Activated B cell treated with CpG ODN at 0.5 μM for 24 hours (primary cell): ENCODE measurements at regions of chr17 and their contacts with region 1.

Region 1: DNA sequence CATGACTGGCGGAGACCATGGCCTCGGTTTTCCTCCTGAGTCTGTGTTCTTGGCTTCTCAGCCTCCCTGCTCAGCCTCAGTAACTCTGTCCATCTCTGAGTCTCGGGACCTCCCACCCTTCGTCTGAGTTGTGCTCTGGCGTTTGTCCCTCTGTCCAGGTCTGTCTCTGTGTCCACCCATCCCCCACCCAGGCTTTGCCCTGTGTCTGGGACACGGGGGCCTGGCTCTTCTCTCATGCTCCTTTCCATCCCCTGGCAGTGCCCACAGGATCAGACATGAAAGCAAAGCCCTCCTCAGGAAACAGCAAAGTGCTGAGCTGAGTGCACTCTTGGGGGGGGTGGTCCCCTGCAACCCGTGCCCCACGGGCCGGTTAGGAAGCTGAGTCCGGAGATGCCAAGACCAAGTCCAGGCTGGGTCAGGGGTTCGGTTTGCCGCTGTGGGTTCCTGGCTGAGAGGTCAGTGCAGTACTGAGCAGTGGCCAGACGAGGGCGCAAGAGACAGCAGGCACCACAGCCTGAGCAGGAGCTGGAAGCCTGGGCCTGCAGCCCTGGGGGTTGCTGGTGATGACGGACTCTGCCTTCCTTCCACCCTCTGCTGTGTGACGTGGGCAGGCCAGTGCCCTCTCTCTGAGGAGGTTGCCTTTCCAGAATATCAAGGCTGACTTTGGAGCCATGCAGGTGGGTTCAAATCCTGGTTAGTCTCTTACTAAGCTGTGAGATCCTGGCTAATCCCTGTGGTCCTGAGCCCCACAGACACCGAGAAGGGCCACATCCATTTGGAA is 2.5 kb downstream of the P2RX1 start:
- DNase-seq: peak; percentile 87
- ATAC-seq: peak; percentile 64
- H3K4me3 Mint-ChIP-seq: peak overlapping the region; percentile 82
- H3K27ac Mint-ChIP-seq: peak overlapping the region; percentile 96
- H3K4me1 Mint-ChIP-seq: peaks cover 90% of the 10 kb centered on the region
- H3K27me3 Mint-ChIP-seq: no peaks in the 10 kb centered on the region
- CTCF ChIP-seq: peak; percentile 55

Region 2: GRCh38 chr17:3738562-3739295 is 175.0 kb before region 1 on chr17:
- CTCF ChIA-PET with region 1: interaction called, 4 read pairs
- POLR2A ChIA-PET with region 1: interaction called, 6 read pairs
- intact Hi-C with region 1: loop called (anchors 10 kb)
- DNase-seq: no peak
- ATAC-seq: peak; percentile 43
- H3K4me3 Mint-ChIP-seq: no peak overlapping the region
- H3K27ac Mint-ChIP-seq: peak overlapping the region; percentile 70
- H3K4me1 Mint-ChIP-seq: peaks cover 34% of the 10 kb centered on the region
- H3K27me3 Mint-ChIP-seq: no peaks in the 10 kb centered on the region
- CTCF ChIP-seq: no peak

Region 3: DNA sequence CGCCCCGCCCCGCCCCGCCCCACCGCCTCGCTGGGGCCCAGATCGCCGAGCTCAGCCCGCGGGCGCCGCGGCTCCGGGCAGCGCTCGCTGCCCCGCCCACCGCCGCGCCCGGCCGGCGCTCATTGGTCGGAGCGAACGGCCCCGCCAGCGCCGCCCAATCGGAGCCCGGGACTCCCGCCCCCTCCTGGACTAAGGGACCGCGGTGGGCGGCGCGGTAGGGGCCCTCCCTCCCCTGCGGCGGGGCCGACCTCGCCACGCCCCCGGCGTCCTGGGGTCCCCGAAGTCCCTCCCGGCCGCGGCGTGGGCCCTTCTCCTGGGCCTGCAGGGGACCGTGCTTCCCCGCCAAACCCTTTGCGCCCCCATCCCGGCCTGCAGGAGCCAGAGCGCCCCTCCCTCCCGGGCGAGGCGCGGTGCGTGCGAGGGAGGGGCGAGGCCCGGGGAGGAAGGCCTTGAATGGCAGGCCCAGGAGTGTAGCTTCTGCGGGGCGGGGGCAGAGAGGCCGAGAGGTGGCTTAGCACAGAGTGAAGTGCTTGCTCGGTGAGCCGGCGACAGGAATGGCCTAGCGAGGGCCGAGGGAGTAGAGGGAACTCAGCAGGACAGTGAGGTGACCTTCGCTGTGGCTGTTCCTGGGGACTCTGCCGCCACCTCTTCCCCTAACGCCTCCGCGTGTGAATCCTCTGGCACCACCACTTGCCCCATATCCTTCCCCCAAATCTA is 20.6 kb before region 1 on chr17 and contains the start of gene CAMKK1:
- CTCF ChIA-PET with region 1: interaction called, 4 read pairs
- POLR2A ChIA-PET with region 1: interaction called, 34 read pairs
- intact Hi-C with region 1: loop called (anchors 1 kb)
- DNase-seq: peak; percentile 93
- ATAC-seq: peak; percentile 88
- H3K4me3 Mint-ChIP-seq: peak within 1 kb of the TSS; percentile 81
- H3K27ac Mint-ChIP-seq: peak within 1 kb of the TSS; percentile 77
- H3K4me1 Mint-ChIP-seq: peaks cover 38% of the 10 kb centered on the region
- H3K27me3 Mint-ChIP-seq: no peaks in the 10 kb centered on the region
- CTCF ChIP-seq: no peak
- total RNA-seq, gene CAMKK1: 4.3 and 6.1 TPM in 2 replicates

Region 4: DNA sequence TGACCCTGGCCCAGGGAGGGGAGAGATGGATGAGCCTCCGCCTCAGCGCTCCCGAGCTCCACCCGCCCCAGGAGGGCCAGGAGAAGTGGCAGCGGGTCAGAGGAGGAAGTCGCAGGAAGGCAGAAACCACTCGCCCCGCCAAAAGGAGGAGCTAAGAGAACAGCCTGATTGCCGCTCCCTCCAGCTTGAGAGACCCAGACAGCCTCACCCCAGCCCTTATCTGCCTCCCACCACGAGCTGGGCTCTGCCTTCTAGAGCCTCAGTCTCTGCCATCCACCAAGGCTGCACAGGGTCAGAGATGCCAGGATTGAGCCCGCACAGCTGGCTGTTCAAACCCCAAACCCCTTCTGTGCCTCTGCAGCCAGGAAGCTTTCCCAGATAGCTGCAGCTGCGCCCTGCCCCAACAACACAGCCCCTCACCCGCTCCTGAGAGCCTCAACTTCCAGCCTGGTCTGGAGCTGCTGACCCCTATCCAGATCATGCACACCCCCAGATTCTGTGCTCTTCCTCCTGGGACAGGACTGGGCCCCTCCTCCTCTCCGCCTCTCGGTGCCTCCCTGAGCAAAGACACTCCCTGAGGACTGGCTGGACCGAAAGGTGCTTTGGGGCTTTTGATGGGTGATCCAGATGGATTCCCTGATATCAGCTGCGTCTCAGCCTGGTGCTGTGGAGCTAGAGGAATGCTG is 51.5 kb after region 1 on chr17:
- CTCF ChIA-PET with region 1: interaction called, 72 read pairs
- POLR2A ChIA-PET with region 1: interaction called, 311 read pairs
- intact Hi-C with region 1: loop called (anchors 1 kb)
- DNase-seq: peak; percentile 64
- ATAC-seq: peak; percentile 49
- H3K4me3 Mint-ChIP-seq: peak overlapping the region; percentile 87
- H3K27ac Mint-ChIP-seq: peak overlapping the region; percentile 94
- H3K4me1 Mint-ChIP-seq: peaks cover 77% of the 10 kb centered on the region
- H3K27me3 Mint-ChIP-seq: no peaks in the 10 kb centered on the region
- CTCF ChIP-seq: no peak

Region 5: DNA sequence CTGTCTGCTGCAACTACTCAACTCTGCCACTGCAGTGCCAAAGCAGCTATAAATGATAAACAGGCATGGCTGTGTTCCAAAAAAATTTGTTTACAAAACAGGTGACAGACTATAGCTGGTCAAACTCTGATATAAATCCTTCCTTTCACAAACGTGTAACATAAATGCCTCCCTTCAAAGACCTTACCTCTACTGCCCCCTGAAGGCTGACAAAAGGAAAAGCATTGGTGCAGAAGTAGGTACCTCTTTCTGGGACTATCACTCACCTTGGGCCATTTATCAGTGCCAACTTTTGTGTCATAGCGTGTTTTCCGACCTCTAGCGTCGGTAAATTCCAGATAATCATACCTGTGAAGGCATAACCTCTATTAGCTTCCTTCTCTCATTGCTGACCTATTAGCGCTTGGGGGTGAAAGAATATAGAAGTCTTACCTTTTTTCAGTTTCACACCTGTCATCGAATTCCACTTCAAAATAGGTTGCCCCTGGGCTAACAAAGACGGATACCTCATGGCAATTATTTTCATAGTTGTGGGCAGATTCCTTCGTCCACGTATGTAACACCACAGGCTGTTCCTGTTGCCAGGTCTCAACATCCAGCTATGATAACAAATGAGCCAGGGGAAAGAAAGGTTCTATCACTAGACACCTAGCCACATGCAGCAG is 161.2 kb after region 1 on chr17:
- CTCF ChIA-PET with region 1: interaction called, 8 read pairs
- POLR2A ChIA-PET with region 1: interaction called, 12 read pairs
- intact Hi-C with region 1: loop called (anchors 1 kb)
- DNase-seq: no peak
- ATAC-seq: peak; percentile 53
- H3K4me3 Mint-ChIP-seq: peak overlapping the region; percentile 76
- H3K27ac Mint-ChIP-seq: peak overlapping the region; percentile 84
- H3K4me1 Mint-ChIP-seq: peaks cover 18% of the 10 kb centered on the region
- H3K27me3 Mint-ChIP-seq: no peaks in the 10 kb centered on the region
- CTCF ChIP-seq: no peak

Region 6: DNA sequence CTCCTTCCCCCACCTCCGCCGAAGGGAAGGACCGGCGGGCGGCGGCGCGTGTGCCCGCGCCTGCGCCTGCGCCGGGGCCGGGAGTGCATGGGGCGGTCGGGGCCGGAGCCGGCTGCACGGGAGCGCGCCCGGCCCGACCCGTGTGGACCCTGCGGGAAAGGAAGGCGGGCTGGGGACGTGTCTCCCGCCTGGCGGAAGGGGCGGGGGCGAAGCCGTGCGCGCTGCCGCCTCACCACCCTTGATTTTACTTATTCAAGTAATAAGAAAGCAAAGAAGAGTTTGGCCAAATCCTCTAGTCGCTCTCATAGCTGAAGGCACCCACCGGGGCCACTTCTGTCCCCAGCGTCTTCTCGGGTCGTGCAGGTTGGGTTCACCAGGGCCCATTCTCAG is 1035.2 kb after region 1 on chr17:
- CTCF ChIA-PET with region 1: no interaction called
- POLR2A ChIA-PET with region 1: interaction called, 3 read pairs
- intact Hi-C with region 1: loop called (anchors 5 kb)
- DNase-seq: peak; percentile 74
- ATAC-seq: peak; percentile 45
- H3K4me3 Mint-ChIP-seq: peak overlapping the region; percentile 100
- H3K27ac Mint-ChIP-seq: peak overlapping the region; percentile 100
- H3K4me1 Mint-ChIP-seq: peaks cover 44% of the 10 kb centered on the region
- H3K27me3 Mint-ChIP-seq: peaks cover 2% of the 10 kb centered on the region
- CTCF ChIP-seq: no peak